ENCODE measurements at regions of chr18 and their contacts with region 1.

Region 1: DNA sequence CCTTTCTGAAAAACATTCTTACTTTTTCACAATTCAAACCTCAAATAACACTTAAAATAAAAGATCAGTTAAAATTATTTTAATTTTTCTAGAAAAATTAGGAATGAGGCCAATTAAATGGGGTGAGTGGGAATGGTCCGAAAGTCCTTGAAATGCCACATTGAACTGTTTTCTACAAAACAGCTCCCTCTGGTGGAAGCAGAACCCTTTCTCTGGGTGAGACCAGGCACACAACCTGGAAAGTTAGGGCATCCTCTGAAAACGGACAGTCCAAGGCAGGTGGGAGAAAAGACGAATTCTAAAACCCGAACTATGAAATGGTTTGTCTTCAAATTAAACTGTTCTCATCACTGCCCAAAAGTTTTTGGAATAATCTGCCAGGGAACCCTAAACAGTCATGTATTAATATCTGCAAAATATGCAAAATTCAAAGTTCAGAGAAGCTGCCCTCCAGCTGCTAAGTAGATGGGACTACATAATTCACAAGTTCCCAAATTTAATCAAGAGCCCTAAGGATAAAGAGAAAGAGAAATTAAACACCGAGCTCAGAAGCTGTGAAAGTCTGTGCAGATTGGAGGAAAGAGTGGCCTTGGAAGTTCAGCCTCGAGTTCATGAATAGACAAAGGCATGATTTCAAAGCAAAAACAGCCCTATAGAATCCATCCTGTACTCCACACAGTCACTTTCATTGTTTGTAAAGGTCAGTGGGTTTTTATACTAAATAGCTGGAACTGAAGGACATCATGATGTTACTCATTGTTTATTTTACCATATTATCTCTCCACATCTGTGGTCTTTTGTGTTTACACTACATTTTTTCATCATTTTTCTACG is 108.3 kb downstream of the PIEZO2 start:
- DNase-seq: peak; percentile 52
- H3K4me3 Mint-ChIP-seq: no peak overlapping the region
- H3K27ac Mint-ChIP-seq: no peak overlapping the region
- H3K4me1 Mint-ChIP-seq: no peaks in the 10 kb centered on the region
- H3K27me3 Mint-ChIP-seq: no peaks in the 10 kb centered on the region
- CTCF ChIP-seq: peak; percentile 88

Region 2: DNA sequence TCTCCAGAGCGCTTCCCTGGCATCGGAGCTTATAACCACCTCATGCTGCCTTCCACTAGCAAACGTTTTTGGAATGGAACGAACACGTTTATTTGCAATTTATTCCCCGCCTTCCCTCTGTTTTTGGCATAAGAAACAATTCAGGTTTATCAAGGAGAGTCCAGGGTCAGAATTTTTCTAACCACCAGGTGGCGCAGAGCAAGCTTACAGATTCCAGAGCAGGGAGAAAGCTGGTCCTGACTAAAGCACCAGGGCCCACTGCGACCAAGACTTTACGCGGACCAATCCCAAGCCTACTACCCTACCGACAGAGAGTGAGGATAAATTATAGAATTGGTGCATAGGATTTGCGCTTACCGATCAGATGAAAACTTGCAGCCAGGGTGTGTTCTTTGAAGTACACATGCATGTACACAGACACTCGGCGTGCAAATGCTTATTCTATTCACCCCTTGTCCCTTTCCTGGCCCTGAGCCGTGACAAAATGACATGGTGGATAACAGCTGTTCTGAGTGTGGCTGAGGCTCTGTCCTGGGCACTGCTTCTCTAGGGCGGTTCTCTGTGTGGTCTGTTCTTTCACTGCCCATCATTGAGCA is 480.5 kb before region 1 on chr18:
- CTCF ChIA-PET with region 1: interaction called, 16 read pairs
- POLR2A ChIA-PET with region 1: no interaction called
- intact Hi-C with region 1: loop called (anchors 5 kb)
- DNase-seq: peak; percentile 73
- H3K4me3 Mint-ChIP-seq: no peak overlapping the region
- H3K27ac Mint-ChIP-seq: peak overlapping the region; percentile 77
- H3K4me1 Mint-ChIP-seq: peaks cover 44% of the 10 kb centered on the region
- H3K27me3 Mint-ChIP-seq: no peaks in the 10 kb centered on the region
- CTCF ChIP-seq: peak; percentile 49

Region 3: DNA sequence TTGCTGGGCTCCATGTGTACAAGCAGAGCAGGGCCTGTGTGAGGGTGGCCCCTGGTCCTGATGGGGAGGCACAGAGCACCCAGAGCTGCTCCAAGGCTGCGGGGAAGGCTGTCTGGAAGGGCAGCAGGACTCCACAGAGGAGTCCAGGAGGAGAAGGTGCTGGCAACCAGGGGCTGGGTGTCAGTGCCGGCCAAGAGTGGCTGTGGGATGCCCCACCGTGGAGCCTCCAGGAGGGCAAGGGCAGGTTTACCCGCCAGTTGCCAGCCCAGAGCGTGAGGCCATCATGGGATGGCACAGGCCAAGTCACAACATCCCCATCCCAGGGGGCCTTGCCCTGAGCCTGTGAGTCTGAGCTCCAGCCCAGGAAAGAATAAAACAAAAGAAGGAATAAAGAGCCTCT is 273.4 kb before region 1 on chr18:
- CTCF ChIA-PET with region 1: no interaction called
- POLR2A ChIA-PET with region 1: no interaction called
- intact Hi-C with region 1: no loop called
- DNase-seq: no peak
- H3K4me3 Mint-ChIP-seq: no peak overlapping the region
- H3K27ac Mint-ChIP-seq: no peak overlapping the region
- H3K4me1 Mint-ChIP-seq: no peaks in the 10 kb centered on the region
- H3K27me3 Mint-ChIP-seq: no peaks in the 10 kb centered on the region
- CTCF ChIP-seq: no peak

Region 4: DNA sequence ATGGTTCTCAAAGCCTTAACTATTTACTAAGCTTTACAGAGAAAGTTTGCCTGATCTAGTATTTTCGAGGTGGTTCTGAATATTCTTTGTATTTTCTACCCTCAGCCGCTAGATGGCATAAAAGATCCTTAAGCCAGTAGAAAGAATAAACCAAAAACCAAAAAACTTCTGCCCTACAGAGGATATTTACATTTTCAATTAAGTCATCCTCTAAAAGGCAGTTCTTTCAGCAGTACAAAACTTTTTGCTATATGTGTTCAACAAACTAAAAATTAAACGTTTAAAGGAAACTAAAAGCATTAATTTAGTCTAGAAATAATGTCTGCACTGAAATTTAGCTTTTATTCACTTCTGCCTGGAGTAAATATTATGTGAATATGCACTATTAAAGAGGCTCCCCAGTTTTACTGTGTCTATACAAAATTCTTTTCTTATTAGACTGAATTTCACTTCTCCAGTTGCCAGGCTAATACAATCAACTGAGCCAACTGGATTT is 189.2 kb before region 1 on chr18:
- CTCF ChIA-PET with region 1: interaction called, 137 read pairs
- POLR2A ChIA-PET with region 1: interaction called, 11 read pairs
- intact Hi-C with region 1: loop called (anchors 1 kb)
- DNase-seq: peak; percentile 55
- H3K4me3 Mint-ChIP-seq: no peak overlapping the region
- H3K27ac Mint-ChIP-seq: no peak overlapping the region
- H3K4me1 Mint-ChIP-seq: peaks cover 6% of the 10 kb centered on the region
- H3K27me3 Mint-ChIP-seq: no peaks in the 10 kb centered on the region
- CTCF ChIP-seq: peak; percentile 69

Region 5: GRCh38 chr18:11005528-11005927 is 35.5 kb before region 1 on chr18:
- CTCF ChIA-PET with region 1: interaction called, 5 read pairs
- POLR2A ChIA-PET with region 1: interaction called, 11 read pairs
- intact Hi-C with region 1: loop called (anchors 5 kb)
- DNase-seq: peak; percentile 56
- H3K4me3 Mint-ChIP-seq: peak overlapping the region; percentile 66
- H3K27ac Mint-ChIP-seq: peak overlapping the region; percentile 93
- H3K4me1 Mint-ChIP-seq: peaks cover 36% of the 10 kb centered on the region
- H3K27me3 Mint-ChIP-seq: no peaks in the 10 kb centered on the region
- CTCF ChIP-seq: no peak

Region 6: DNA sequence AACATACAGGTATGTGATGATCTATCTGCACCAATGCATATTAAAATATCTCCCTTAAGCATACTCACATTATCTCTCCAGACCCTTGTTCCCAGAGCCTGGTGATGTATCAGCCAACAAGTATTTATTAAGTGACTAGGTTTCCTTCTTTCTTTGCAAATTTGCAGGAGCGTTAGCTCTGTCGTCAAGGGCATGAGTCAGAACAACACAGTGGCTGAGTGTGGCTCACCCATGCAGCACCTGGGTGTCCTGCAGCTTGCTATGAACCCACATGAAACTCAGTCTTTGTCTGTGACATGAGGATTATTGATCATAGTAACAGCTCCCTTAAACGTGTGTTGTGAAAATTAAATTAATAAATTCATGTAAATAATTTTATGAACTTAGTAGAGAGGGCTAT is 11.8 kb after region 1 on chr18:
- CTCF ChIA-PET with region 1: interaction called, 19 read pairs
- POLR2A ChIA-PET with region 1: no interaction called
- intact Hi-C with region 1: no loop called
- DNase-seq: no peak
- H3K4me3 Mint-ChIP-seq: no peak overlapping the region
- H3K27ac Mint-ChIP-seq: no peak overlapping the region
- H3K4me1 Mint-ChIP-seq: peaks cover 12% of the 10 kb centered on the region
- H3K27me3 Mint-ChIP-seq: no peaks in the 10 kb centered on the region
- CTCF ChIP-seq: no peak

Region 7: GRCh38 chr18:11071300-11071699 is 30.3 kb after region 1 on chr18:
- CTCF ChIA-PET with region 1: no interaction called
- POLR2A ChIA-PET with region 1: no interaction called
- intact Hi-C with region 1: no loop called
- DNase-seq: no peak
- H3K4me3 Mint-ChIP-seq: no peak overlapping the region
- H3K27ac Mint-ChIP-seq: no peak overlapping the region
- H3K4me1 Mint-ChIP-seq: no peaks in the 10 kb centered on the region
- H3K27me3 Mint-ChIP-seq: no peaks in the 10 kb centered on the region
- CTCF ChIP-seq: no peak

Region 8: GRCh38 chr18:11512096-11513030 is 471.3 kb after region 1 on chr18:
- CTCF ChIA-PET with region 1: interaction called, 6 read pairs
- POLR2A ChIA-PET with region 1: no interaction called
- intact Hi-C with region 1: loop called (anchors 1 kb)
- DNase-seq: peak; percentile 68
- H3K4me3 Mint-ChIP-seq: no peak overlapping the region
- H3K27ac Mint-ChIP-seq: no peak overlapping the region
- H3K4me1 Mint-ChIP-seq: no peaks in the 10 kb centered on the region
- H3K27me3 Mint-ChIP-seq: peaks cover 17% of the 10 kb centered on the region
- CTCF ChIP-seq: peak; percentile 74